ENCODE measurements at regions of chr2 and their contacts with region 1.

Region 1: DNA sequence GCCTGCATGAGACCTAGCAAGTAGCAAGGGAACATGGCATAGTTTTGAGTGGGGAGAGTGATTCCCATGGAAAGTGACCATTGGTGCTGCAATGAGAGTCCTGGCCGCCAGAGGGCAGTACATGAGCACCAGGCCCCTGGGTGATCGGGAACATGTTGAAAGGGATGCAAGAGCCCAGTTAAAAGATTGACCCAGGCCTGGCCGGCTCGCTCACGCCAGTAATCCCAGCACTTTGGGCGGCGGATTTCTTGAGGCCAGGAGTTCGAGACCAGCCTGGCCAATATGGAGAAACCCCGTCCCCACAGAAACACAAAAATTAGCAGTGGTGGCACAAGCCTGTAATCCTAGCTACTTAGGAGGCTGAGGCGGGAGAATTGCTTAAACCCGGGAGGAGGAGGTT is 22.2 kb downstream of the FAP start:
- DNase-seq: peak; percentile 71
- H3K4me3 ChIP-seq: no peak overlapping the region
- H3K27ac ChIP-seq: no peak overlapping the region
- H3K4me1 ChIP-seq: no peaks in the 10 kb centered on the region
- H3K27me3 ChIP-seq: no peaks in the 10 kb centered on the region
- CTCF ChIP-seq: peak; percentile 88 to 92
- POLR2A ChIP-seq: no peak

Region 2: DNA sequence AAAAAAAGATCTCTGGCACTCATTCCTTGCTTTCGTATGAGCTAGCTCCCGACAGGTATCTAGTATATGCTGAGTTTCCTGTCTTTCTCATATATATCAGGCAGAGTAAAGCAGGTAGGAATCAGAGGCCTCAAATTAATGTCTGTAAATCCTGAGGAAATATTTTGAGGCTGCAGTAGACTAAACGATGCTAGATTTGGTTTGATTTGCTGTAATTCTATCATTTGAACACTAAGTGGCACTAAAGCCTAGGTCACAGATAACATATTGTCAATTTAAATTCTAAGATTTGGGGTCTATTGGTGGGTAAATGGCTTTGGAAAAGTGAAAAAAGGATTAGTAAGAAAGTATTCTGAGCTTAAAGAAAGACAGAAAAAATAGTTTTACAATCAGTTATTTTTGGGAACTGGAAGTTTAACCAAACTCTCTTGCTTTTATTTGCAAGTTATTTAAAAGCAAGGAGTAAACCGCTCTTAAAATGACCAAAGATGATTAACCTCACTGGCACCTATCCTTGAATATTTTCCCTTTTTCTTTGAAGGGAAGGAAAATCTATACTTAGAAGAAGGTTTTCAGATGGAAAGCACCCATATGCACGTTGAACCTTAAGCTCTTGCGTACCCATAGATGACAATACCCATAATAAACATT is 634.4 kb before region 1 on chr2:
- CTCF ChIA-PET with region 1: interaction called, 10 read pairs
- POLR2A ChIA-PET with region 1: no interaction called
- dilution Hi-C with region 1: no loop called
- intact Hi-C with region 1: loop called (anchors 5 kb)
- DNase-seq: peak; percentile 42
- H3K4me3 ChIP-seq: no peak overlapping the region
- H3K27ac ChIP-seq: no peak overlapping the region
- H3K4me1 ChIP-seq: no peaks in the 10 kb centered on the region
- H3K27me3 ChIP-seq: no peaks in the 10 kb centered on the region
- CTCF ChIP-seq: peak; percentile 47
- POLR2A ChIP-seq: no peak

Region 3: DNA sequence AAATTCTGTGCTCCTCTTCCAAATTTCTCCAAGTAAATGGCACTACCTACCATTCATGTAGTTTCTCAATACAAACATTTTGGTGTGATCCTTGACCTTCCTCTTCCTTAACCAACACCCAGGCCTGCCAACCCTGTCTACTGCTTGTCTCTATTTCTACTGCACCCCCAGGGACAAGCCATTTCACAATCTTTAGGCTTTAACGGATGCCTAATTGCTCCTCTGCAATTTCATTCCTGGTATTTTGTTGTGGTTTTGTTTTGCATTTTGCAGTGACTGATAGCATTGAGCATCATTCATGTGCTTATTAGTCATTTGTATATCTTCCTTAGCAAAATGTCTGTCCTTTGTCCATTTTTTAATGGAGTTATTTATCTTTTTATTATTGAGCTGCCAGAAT is 12.1 kb after region 1 on chr2:
- CTCF ChIA-PET with region 1: interaction called, 45 read pairs
- POLR2A ChIA-PET with region 1: no interaction called
- dilution Hi-C with region 1: no loop called
- intact Hi-C with region 1: no loop called
- DNase-seq: no peak
- H3K4me3 ChIP-seq: no peak overlapping the region
- H3K27ac ChIP-seq: no peak overlapping the region
- H3K4me1 ChIP-seq: no peaks in the 10 kb centered on the region
- H3K27me3 ChIP-seq: no peaks in the 10 kb centered on the region
- CTCF ChIP-seq: no peak
- POLR2A ChIP-seq: no peak

Region 4: GRCh38 chr2:162261032-162261945 is 40.2 kb after region 1 on chr2:
- CTCF ChIA-PET with region 1: interaction called, 17 read pairs
- POLR2A ChIA-PET with region 1: no interaction called
- dilution Hi-C with region 1: no loop called
- intact Hi-C with region 1: no loop called
- DNase-seq: peak; percentile 57
- H3K4me3 ChIP-seq: no peak overlapping the region
- H3K27ac ChIP-seq: no peak overlapping the region
- H3K4me1 ChIP-seq: peaks cover 14% of the 10 kb centered on the region
- H3K27me3 ChIP-seq: no peaks in the 10 kb centered on the region
- CTCF ChIP-seq: no peak
- POLR2A ChIP-seq: no peak

Region 5: GRCh38 chr2:162318328-162319180 is 97.5 kb after region 1 on chr2 and contains the start of gene IFIH1:
- CTCF ChIA-PET with region 1: interaction called, 12 read pairs
- POLR2A ChIA-PET with region 1: no interaction called
- dilution Hi-C with region 1: no loop called
- intact Hi-C with region 1: no loop called
- DNase-seq: peak; percentile 88
- H3K4me3 ChIP-seq: peak within 1 kb of the TSS; percentile 56 to 66 (median 59)
- H3K27ac ChIP-seq: peak within 1 kb of the TSS; percentile 43
- H3K4me1 ChIP-seq: peaks cover 8% of the 10 kb centered on the region
- H3K27me3 ChIP-seq: no peaks in the 10 kb centered on the region
- CTCF ChIP-seq: peak; percentile 22 to 48
- POLR2A ChIP-seq: no peak
- total RNA-seq, gene IFIH1: 4.7 and 6.9 TPM in 2 replicates

Measured in endothelial cell of umbilical vein (primary cell).